Transverse colon (tissue), 4 donors: ENCODE measurements at regions of chr10 and their contacts with region 1.

Region 1: DNA sequence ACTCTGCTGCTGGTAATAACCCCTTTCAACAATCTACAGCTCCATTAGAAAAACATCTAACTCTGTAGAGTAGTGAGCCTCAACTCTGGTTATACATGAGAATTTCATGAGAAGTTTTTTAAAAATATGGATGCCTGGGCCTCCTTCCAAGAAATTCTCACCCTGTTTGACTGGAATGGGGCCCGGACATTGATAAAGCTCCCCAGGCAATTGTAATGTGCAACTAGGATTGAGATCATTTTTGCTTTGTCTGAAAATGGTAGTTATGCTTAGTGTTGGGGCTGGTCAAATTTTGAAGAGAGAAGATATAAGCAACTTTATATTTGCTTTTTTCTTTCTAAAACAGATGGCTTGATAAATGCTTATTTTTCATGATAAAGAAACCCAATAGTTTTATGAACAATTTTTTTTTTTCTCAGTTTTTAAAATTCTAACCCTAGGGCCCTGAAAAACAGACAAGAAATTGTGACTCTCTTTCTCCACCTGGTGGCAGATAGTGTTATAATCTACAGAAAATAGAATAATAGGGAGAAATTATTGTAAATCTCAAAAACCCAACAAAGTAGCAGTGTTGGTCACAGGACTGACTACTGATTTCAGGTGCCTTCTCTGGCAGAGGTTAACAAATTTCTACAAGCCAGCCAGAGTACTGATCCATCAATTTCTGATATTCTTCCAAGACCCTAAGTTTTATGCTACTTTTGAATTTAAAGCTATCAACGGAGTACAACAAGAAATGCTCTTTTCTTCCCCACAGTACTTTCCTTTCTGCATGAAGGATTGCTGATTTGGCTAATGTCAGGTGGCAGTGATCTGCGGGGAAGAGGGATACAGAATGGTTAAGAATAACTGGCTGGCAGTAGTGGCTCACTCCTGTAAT is 174.8 kb downstream of the DKK1 start:
- DNase-seq: no peak
- H3K4me3 ChIP-seq: no peak overlapping the region
- H3K27ac ChIP-seq: no peak overlapping the region
- H3K4me1 ChIP-seq: no peaks in the 10 kb centered on the region
- H3K27me3 ChIP-seq: no peaks in the 10 kb centered on the region
- CTCF ChIP-seq: peak; percentile 39 to 58 (median 51)
- EP300 ChIP-seq: no peak
- POLR2A ChIP-seq: no peak

Region 2: GRCh38 chr10:52308251-52309031 is 180.4 kb before region 1 on chr10:
- in situ Hi-C with region 1: loop called (anchors 5 to 10 kb)
- intact Hi-C with region 1: loop called (anchors 10 kb)
- DNase-seq: peak; percentile 40
- H3K4me3 ChIP-seq: peak overlapping the region in 3 of 4 donors; percentile 26 to 56 (median 37)
- H3K27ac ChIP-seq: no peak overlapping the region
- H3K4me1 ChIP-seq: peaks cover 2 to 16% (median 6%) of the 10 kb centered on the region in 4 donors
- H3K27me3 ChIP-seq: peaks cover 57% of the 10 kb centered on the region
- CTCF ChIP-seq: peak; percentile 58 to 68 (median 60)
- EP300 ChIP-seq: no peak
- POLR2A ChIP-seq: no peak

Region 3: DNA sequence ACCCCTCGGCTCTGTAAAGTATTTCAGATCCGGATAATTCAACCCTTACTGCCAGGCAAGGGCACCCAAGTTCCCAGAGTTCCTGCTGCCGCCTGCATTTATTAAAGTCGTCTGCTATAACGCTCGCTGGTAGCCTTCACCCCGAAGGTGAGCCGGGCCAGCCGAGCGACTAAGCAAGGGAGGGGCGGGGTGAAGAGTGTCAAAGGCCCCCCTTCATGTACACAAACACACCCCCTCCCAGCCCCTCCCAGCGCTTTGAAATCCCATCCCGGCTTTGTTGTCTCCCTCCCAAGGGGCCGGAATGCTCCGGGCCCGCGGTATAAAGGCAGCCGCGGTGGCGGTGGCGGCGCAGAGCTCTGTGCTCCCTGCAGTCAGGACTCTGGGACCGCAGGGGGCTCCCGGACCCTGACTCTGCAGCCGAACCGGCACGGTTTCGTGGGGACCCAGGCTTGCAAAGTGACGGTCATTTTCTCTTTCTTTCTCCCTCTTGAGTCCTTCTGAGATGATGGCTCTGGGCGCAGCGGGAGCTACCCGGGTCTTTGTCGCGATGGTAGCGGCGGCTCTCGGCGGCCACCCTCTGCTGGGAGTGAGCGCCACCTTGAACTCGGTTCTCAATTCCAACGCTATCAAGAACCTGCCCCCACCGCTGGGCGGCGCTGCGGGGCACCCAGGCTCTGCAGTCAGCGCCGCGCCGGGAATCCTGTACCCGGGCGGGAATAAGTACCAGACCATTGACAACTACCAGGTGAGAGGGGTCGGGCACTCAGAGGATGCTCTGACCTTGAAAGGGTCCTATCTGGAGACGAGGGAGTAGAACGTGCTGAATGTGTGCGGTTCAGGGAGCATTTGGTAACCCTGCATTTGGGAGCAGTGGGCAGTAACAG is 174.7 kb before region 1 on chr10 and contains the start of gene DKK1:
- in situ Hi-C with region 1: loop called (anchors 5 to 10 kb)
- intact Hi-C with region 1: loop called (anchors 10 kb)
- DNase-seq: peak; percentile 77
- H3K4me3 ChIP-seq: peak within 1 kb of the TSS; percentile 13 to 62 (median 40)
- H3K27ac ChIP-seq: no peak within 1 kb of the TSS
- H3K4me1 ChIP-seq: peaks cover 6 to 23% (median 17%) of the 10 kb centered on the region in 4 donors
- H3K27me3 ChIP-seq: peaks cover 66% of the 10 kb centered on the region
- CTCF ChIP-seq: peak; percentile 68 to 75 (median 70)
- EP300 ChIP-seq: no peak
- POLR2A ChIP-seq: no peak
- total RNA-seq, gene DKK1: 0.27 TPM in 1 of 4 donors, not detected in the others